Right ventricle myocardium superior (tissue), 1 donor: ENCODE measurements at regions of chr1 and their contacts with region 1.

Region 1: DNA sequence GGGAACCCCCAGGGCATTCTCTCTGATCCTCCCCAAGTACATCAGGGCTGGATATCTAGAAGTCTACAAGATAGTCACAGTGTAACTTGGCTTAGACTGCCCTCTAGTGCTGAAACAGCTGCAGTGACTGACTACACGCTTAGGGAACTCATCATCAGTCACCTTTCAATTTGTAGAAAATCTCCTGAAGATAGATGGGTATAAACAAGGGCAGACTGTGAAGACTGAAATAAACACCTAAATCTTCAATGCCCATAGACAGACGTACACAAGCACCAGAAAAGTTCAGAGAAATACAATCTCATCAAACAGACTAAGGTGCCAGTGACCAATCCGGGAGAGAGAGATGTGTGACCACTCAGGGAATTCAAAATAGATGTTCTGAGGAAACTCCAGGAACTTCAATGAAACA is 46.6 kb downstream of the PACC1 start:
- DNase-seq: no peak
- ATAC-seq: peak; percentile 76

Region 2: DNA sequence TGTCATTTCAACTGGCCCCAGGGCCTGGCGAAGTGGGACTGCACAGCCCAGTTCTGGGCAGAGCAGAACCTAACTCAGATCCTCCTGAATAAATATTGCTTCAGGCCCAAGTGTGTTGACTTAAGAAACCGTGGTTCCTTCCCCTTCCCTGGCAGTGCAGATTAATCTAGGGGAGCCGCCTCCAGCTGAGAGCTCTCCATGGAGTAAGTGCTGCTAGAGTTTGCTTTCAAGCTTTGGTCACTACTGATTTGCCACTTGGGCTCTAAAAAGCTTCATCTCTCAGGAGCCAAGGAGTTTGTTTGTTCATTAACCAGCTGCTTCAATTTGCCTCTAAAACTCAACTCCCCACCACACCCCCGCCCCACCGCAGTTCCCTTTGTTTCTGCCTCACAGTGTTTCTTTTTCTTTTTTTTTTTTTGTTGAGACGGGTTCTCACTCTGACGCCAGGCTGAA is 220.5 kb before region 1 on chr1:
- intact Hi-C with region 1: no loop called
- DNase-seq: no peak
- ATAC-seq: no peak

Region 3: GRCh38 chr1:212455803-212456528 is 87.9 kb after region 1 on chr1:
- intact Hi-C with region 1: loop called (anchors 5 kb)
- DNase-seq: peak; percentile 91
- ATAC-seq: peak; percentile 85

Region 4: DNA sequence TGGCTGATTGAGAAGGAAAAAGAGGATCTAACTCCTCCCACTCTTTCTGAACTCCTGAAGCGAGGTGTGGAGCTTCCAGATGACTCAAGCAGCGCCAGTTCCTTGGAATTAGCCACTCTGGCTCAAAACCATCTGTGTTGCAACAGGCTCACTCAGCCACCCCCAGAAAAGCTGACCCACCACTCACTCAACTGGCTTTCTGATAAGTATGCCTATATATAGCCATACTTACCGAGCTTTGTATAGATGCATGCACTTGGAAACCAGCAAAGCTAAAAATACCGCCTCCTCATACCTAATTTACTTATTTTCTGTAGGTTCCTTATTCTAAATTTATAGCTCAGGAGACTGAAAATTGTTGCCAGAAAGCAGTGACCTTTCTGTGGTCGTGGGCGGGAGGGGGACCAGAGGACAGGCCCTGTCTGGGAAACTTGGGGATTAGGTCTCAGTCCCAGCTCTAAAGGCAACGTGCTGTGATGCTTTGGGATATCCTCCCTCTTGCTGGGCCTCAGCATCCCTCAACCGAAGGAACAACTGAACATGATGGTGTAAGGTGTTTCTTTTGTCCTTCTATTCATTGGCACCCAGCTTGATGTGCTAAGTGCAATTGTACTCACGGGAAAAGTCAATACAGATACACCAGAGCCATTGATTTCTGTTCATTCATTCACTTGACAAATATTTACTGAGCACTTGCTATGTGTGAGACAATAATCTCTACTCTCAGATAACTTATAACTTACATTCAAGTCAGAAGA is 130.4 kb after region 1 on chr1:
- intact Hi-C with region 1: no loop called
- DNase-seq: no peak
- ATAC-seq: no peak